Ascending aorta (tissue), 2 donors: ENCODE measurements at regions of chr19 and their contacts with region 1.

Region 1: GRCh38 chr19:51367565-51368365 is 1.0 kb downstream of the CLDND2 start:
- DNase-seq: peak; percentile 95 to 100
- H3K4me3 ChIP-seq: peak overlapping the region; percentile 79 to 82
- H3K27ac ChIP-seq: peak overlapping the region; percentile 83 to 94
- H3K4me1 ChIP-seq: peaks cover 6 to 12% of the 10 kb centered on the region in 2 donors
- H3K27me3 ChIP-seq: no peaks in the 10 kb centered on the region
- CTCF ChIP-seq: no peak

Region 2: DNA sequence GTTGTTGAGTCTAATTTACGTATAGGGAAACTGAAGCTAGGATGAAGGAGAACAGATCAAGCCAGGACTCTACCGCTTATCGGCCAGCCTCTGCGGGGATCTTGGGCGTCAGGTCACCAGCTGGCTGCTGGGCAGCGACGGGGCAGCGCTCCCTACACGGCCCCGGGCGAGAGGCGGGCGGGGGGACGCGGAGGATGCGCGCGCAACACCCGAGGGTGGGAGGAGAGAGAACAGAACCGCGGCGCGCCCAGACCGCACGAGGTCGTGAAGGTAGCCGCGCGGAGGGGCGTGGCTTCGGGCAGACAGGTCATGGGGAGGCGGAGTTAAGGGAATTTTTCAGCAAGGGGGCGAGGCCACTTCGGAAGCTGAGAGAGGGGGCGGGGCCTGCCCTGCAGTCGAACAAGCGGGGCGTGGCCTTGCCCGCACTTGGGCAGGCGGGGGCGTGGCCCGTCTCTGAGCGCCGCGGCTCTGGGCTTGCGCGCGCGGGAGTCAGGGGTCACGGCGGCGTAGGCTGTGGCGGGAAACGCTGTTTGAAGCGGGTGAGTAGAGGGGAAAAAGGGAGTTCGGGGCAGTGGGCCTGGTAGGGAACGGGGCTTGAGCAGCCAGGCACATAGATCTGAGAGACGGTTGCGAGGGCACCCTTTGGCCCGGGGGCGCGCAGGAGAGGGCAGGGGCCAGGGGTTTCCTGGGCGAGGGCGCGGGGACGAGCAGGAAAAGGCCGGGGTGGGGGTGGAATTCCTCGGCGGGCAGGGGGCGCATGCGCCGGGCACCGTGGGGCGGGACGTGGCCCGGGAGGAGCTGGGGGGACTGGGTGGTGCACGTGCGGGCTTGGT is 983.7 kb before region 1 on chr19 and contains the start of gene POLD1:
- intact Hi-C with region 1: loop called (anchors 10 kb)
- DNase-seq: peak; percentile 94 to 99
- H3K4me3 ChIP-seq: peak within 1 kb of the TSS; percentile 61 to 76
- H3K27ac ChIP-seq: peak within 1 kb of the TSS; percentile 87 to 88
- H3K4me1 ChIP-seq: peaks cover 8 to 10% of the 10 kb centered on the region in 2 donors
- H3K27me3 ChIP-seq: no peaks in the 10 kb centered on the region
- CTCF ChIP-seq: no peak
- total RNA-seq, gene POLD1: 22.9 TPM

Region 3: DNA sequence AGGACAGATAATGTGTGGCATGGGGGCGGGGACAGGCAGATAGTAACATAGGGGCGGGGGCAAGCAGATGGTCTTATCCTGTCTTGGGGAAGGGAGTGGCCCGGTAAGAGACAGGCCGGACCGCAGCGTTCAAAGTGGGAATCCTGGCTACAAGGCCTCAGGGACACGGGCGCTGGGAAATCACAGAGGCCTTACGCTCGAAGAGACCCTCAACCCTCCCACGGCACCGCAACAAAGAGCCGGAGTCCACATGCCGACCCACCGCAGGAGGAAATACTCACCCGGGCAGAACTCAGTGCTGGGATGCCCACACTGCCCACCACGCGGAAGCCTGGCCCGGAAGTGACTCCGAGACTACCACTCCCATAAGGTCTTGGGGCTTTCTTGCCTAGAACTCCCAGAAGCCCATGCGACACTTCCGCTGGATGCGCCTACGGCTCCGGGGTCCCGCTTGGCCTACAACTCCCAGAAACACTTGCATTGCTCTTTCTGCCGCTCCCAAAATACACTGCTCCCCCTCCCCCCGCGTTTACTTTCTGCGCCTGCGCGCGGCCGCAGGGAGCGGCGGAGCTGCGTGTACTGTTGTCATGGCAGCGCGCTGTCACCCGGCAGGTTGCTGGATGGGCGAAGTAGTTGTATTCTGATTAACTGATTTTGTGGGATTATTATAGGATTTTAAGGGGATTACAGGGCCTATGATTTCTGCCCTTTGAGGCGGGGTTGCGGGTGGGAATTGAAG is 259.5 kb before region 1 on chr19 and contains the start of gene CTU1:
- intact Hi-C with region 1: loop called (anchors 10 kb)
- DNase-seq: peak; percentile 98 to 100
- H3K4me3 ChIP-seq: peak within 1 kb of the TSS; percentile 69 to 74
- H3K27ac ChIP-seq: peak within 1 kb of the TSS; percentile 37 to 45
- H3K4me1 ChIP-seq: peaks cover 6 to 9% of the 10 kb centered on the region in 2 donors
- H3K27me3 ChIP-seq: no peaks in the 10 kb centered on the region
- CTCF ChIP-seq: peak in 1 of 3 experiments; percentile 50
- total RNA-seq, gene CTU1: 8.9 TPM

Region 4: DNA sequence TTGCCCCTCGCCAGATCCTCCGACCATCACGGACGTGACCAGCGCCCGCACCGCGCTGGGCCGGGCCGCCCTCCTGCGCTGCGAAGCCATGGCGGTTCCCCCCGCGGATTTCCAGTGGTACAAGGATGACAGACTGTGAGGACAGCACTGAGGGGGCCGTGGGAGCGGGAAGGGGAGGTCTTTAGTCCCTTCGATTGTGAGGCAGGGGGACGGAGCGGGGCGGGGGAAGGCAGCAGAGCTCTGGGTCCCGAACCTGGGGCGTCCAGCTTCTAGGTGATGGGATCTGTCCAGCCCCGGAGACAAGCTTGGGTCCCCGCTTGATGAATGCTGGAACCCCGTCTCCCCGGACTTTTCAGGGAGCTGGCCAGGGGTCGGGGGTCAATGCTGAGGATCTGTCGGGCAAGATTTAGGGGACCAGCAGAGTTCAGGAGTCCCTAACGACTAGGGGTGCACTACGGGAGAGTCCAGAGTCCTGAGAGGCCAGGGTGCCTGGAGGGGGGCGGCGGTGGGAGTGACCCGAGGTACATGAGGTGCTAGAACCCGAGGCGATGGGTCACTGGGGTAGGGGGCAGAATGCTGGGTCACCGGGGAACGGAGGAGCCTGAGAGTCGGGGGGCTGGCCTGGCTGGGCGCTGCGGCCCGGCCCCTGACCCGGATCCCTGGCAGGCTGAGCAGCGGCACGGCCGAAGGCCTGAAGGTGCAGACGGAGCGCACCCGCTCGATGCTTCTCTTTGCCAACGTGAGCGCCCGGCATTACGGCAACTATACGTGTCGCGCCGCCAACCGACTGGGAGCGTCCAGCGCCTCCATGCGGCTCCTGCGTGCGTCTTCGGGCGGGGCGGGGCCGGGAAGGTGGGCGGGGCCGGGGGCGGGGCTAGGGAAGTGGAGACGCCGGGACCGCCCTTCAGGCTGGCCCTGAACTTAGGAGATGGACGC is 40.4 kb before region 1 on chr19:
- intact Hi-C with region 1: no loop called
- DNase-seq: no peak
- H3K4me3 ChIP-seq: peak overlapping the region; percentile 24 to 41
- H3K27ac ChIP-seq: no peak overlapping the region
- H3K4me1 ChIP-seq: peaks cover 0 to 3% of the 10 kb centered on the region in 2 donors
- H3K27me3 ChIP-seq: no peaks in the 10 kb centered on the region
- CTCF ChIP-seq: peak in 1 of 3 experiments; percentile 11

Region 5: DNA sequence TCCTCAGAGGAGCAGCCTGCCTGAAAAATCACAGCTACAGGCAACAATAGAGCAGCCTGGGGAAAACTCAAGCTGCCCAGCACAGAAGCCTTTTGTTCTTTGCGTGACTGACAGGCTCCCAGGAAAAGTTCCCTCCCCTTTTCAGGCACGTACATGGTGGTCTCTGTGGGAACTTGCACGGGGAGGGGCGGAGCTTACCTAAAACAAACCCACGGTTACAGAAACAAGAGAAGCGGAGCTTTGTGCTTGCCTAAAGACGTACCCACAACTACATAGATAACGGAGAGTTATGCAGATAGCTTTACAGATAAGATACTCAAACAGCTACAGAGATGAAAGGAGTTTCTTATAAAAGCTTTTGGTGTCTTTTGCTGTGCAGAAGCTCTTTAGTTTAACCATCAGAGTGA is 13.0 kb before region 1 on chr19:
- intact Hi-C with region 1: no loop called
- DNase-seq: no peak
- H3K4me3 ChIP-seq: no peak overlapping the region
- H3K27ac ChIP-seq: no peak overlapping the region
- H3K4me1 ChIP-seq: no peaks in the 10 kb centered on the region
- H3K27me3 ChIP-seq: no peaks in the 10 kb centered on the region
- CTCF ChIP-seq: no peak

Region 6: DNA sequence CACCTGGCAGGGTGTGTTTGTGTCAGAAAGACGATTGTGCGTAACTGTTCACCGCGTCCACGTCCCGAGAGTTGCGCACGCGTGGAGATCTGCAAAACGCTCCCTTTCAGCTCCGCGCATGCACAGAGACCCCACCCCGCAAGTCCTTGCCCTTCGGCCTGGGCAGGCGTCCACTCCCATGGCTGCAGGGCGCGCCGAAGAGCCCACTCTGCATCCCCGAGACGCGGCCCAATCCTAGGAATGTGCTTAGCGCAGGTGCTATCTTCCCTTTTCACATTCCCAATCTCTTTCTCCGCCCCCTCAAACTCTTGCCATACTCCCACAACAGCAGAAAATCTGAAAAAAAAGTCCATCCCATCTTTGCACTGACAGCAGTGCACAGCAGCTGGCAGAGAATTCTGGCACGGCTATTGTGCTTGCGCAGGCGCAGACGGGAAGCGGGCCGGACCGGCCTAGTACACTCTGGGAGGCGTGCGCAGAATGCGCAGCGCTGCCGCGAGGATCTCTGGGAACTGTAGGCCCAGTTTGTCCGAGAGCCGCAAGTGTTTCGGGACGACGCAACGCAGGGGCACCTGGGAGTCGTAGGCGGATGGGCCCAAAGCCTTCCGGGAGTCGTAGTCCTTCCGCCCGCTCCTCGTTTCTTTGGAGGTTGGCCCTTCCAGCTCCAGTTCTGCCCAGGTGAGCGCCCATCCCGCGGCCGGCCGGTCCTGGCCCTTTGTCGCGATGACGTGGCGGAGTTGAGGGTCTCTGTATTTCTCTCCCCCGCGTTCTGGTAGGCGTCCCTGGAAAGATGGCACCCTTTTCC is 226.4 kb after region 1 on chr19:
- intact Hi-C with region 1: loop called (anchors 10 kb)
- DNase-seq: peak; percentile 91 to 99
- H3K4me3 ChIP-seq: peak overlapping the region; percentile 71 to 84
- H3K27ac ChIP-seq: peak overlapping the region in 1 of 2 donors; percentile 58
- H3K4me1 ChIP-seq: peaks cover 10 to 11% of the 10 kb centered on the region in 2 donors
- H3K27me3 ChIP-seq: no peaks in the 10 kb centered on the region
- CTCF ChIP-seq: no peak

Region 7: DNA sequence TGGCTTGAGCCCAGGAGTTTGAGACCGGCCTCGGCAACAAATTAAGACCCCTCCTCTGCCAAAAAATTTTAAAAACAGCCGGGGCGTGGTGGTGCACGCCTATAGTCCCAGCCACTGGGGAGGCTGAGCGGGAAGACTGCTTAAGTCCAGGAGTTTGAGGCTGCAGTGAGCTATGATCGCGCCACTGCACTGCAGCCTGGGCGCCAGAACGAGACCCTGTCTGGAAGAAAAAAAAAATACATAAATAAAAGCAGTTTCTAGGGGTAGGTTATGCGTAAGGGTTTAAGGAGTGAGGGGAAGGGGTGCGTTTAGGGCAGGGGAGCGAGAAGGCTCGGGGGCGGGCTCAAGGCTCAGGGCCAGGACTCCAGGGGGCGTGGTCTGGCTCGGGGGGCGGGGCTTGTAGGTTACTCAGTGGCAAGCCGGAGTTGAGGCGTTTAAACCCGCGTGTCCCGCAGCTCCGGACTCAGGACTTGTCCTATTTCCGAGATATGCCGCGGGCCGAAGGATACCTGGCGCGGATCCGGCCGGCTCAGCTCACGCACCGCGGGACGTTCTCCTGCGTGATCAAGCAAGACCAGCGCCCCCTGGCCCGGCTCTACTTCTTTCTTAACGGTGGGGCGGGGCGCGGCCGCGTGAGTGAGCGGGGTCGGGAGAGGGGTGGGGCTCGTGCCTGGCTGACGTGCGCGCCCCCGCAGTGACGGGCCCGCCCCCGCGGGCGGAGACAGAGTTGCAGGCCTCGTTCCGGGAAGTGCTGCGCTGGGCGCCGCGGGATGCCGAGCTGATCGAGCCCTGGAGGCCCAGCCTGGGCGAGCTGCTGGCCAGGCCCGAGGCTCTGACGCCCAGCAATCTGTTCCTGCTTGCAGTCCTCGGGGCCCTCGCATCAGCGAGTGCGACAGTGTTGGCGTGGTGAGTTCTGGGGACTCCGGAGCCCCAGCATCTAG is 336.1 kb after region 1 on chr19:
- intact Hi-C with region 1: loop called (anchors 5 kb)
- DNase-seq: peak; percentile 90 to 99
- H3K4me3 ChIP-seq: peak overlapping the region; percentile 60 to 76
- H3K27ac ChIP-seq: peak overlapping the region; percentile 80 to 93
- H3K4me1 ChIP-seq: peaks cover 9 to 17% of the 10 kb centered on the region in 2 donors
- H3K27me3 ChIP-seq: no peaks in the 10 kb centered on the region
- CTCF ChIP-seq: peak; percentile 32 to 54 (median 44)